Natural killer cell (primary cell): ENCODE measurements at regions of chr10 and their contacts with region 1.

Region 1: DNA sequence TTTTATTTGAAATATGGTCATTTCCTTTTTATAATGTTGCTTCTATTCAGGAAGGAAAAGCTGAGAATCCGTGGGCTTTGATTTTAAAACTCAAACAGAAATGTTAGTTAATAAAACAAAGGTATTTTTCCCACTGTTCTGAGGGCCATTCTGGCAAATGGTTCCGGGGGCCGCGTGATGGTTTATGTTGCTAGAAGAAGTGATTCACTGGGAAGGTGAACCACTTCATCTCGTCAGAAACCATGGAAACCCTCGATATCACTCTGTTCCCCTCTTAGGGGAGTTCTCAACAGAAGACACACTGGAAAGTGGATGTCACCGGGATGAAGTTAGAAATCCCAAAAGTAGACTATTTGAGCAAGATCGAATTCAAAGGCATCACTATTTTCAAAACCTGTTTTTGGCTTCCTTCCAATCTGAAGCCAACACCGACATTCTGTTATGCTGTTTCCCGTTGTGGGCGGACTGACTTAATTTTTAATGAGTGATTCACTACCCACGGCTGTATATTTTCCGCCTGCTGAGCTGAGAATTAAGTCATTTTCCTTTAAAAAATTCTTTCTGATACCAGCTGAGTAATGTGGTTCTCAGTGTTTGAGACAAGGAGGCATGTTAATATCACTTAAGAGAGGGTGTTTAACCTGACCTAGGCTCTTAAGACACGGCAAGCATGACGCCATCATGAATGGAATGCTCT is 84.1 kb downstream of the PTPRE start:
- DNase-seq: peak in 1 of 2 donors; percentile 63
- ATAC-seq: peak; percentile 49 to 66 (median 56)
- H3K4me3 ChIP-seq: no peak overlapping the region
- H3K4me3 Mint-ChIP-seq: peak overlapping the region; percentile 66
- H3K27ac ChIP-seq: peak overlapping the region; percentile 58
- H3K27ac Mint-ChIP-seq: peak overlapping the region; percentile 83 to 84
- H3K4me1 ChIP-seq: peaks cover 8% of the 10 kb centered on the region
- H3K4me1 Mint-ChIP-seq: peaks cover 18 to 20% of the 10 kb centered on the region in 2 donors
- H3K27me3 ChIP-seq: no peaks in the 10 kb centered on the region
- H3K27me3 Mint-ChIP-seq: no peaks in the 10 kb centered on the region
- CTCF ChIP-seq: no peak

Region 2: GRCh38 chr10:128064108-128064969 is 73.3 kb after region 1 on chr10:
- intact Hi-C with region 1: loop called (anchors 2 kb)
- DNase-seq: peak; percentile 63 to 86
- ATAC-seq: peak; percentile 60 to 76 (median 64)
- H3K4me3 ChIP-seq: no peak overlapping the region
- H3K4me3 Mint-ChIP-seq: peak overlapping the region; percentile 88
- H3K27ac ChIP-seq: peak overlapping the region; percentile 86
- H3K27ac Mint-ChIP-seq: peak overlapping the region; percentile 88
- H3K4me1 ChIP-seq: peaks cover 87% of the 10 kb centered on the region
- H3K4me1 Mint-ChIP-seq: peaks cover 84 to 85% of the 10 kb centered on the region in 2 donors
- H3K27me3 ChIP-seq: no peaks in the 10 kb centered on the region
- H3K27me3 Mint-ChIP-seq: no peaks in the 10 kb centered on the region
- CTCF ChIP-seq: no peak